Calu3 (cell line): ENCODE measurements at regions of chr12 and their contacts with region 1.

Region 1: DNA sequence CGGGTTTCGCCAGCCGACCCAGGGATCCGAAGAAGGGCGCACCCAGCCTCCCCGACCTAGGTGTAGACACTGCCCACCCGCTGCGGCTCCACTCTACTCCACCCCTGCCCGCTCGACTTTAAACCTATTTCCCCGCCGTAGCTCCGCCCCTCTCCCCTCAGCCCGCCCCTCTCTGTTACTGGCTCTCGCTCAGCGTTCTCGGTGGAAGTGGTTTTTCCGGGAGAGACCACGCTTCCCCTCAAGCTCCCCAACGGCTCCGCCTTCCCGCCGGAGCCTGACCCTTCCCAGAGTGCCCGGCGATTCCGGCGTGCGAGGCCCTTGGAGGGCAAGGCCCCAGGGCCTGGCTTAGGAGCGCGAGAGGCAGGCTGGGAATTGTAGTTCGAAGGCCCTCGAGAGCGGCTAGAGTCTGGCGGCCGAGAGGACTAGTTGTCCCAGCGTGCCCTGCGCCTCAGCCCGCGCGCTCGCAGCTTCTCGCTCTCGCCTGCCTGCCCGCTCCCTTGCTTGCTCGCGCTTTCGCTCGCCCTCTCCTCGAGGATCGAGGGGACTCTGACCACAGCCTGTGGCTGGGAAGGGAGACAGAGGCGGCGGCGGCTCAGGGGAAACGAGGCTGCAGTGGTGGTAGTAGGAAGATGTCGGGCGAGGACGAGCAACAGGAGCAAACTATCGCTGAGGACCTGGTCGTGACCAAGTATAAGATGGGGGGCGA is at the start of gene PA2G4:
- DNase-seq: peak; percentile 99
- H3K4me3 Mint-ChIP-seq: peak within 1 kb of the TSS; percentile 96
- H3K27ac Mint-ChIP-seq: peak within 1 kb of the TSS; percentile 95
- H3K4me1 Mint-ChIP-seq: peaks cover 21% of the 10 kb centered on the region
- H3K27me3 Mint-ChIP-seq: no peaks in the 10 kb centered on the region
- CTCF ChIP-seq: no peak
- total RNA-seq, gene PA2G4: 229 and 233 TPM in 2 replicates

Region 2: GRCh38 chr12:55830601-55831446 is 273.4 kb before region 1 on chr12:
- CTCF ChIA-PET with region 1: no interaction called
- intact Hi-C with region 1: no loop called
- DNase-seq: peak; percentile 69
- H3K4me3 Mint-ChIP-seq: peak overlapping the region; percentile 91
- H3K27ac Mint-ChIP-seq: peak overlapping the region; percentile 84
- H3K4me1 Mint-ChIP-seq: peaks cover 27% of the 10 kb centered on the region
- H3K27me3 Mint-ChIP-seq: peaks cover 3% of the 10 kb centered on the region
- CTCF ChIP-seq: no peak

Region 3: GRCh38 chr12:56041552-56042429 is 62.5 kb before region 1 on chr12 and contains the start of gene RPS26:
- CTCF ChIA-PET with region 1: interaction called, 6 read pairs
- intact Hi-C with region 1: loop called (anchors 2 kb)
- DNase-seq: peak; percentile 93
- H3K4me3 Mint-ChIP-seq: peak within 1 kb of the TSS; percentile 90
- H3K27ac Mint-ChIP-seq: peak within 1 kb of the TSS; percentile 95
- H3K4me1 Mint-ChIP-seq: peaks cover 18% of the 10 kb centered on the region
- H3K27me3 Mint-ChIP-seq: no peaks in the 10 kb centered on the region
- CTCF ChIP-seq: peak; percentile 51
- total RNA-seq, gene RPS26: 50.6 and 50.7 TPM in 2 replicates

Region 4: GRCh38 chr12:56078990-56079664 is 25.1 kb before region 1 on chr12:
- CTCF ChIA-PET with region 1: interaction called, 23 read pairs
- intact Hi-C with region 1: loop called (anchors 1 kb)
- DNase-seq: peak; percentile 98
- H3K4me3 Mint-ChIP-seq: peak overlapping the region; percentile 99
- H3K27ac Mint-ChIP-seq: peak overlapping the region; percentile 95
- H3K4me1 Mint-ChIP-seq: peaks cover 21% of the 10 kb centered on the region
- H3K27me3 Mint-ChIP-seq: no peaks in the 10 kb centered on the region
- CTCF ChIP-seq: peak; percentile 66